GM12878 (cell line): ENCODE measurements at regions of chr4 and their contacts with region 1.

Region 1: DNA sequence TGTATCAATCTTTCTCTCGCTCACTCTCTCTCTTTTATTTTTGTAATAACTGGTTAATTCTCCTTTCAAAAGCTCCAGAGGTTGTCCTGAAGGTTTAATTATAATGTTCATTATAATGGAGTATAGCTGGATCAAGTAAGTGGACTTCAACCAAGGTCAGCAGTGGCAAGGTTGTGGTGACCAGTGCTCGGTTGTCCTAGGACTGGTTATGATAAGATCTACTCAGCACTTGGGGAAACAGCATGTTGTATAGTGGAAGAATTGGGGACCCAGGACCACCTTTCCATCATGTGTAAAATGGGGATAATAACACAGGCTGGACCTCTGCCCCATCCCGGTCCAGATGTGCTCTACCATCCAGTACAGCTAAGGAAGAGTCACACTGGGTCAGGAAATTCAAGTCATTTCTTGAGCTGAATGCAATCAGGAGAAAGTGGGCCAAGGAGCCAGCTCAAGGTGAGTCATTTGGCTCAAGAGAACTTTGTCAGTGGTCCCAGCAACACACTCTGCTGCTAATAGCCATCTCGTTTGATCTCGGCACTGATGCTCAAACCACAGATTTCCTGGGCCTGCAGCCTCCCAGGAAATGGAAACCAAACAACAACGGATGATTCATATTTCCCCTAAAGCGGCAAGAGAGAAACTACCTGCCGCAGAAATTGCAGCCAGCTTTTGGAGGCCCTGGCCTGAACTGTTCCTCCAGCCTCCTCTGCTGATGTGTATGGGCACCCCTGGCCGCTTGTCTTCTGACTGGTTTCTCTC is 123.6 kb upstream of the RBPJ start:
- DNase-seq: peak; percentile 89
- ATAC-seq: peak; percentile 84
- H3K4me3 ChIP-seq: no peak overlapping the region
- H3K27ac ChIP-seq: peak overlapping the region; percentile 14; the same call in 1 of the 2 replicates
- H3K4me1 ChIP-seq: peaks cover 35% of the 10 kb centered on the region
- H3K27me3 ChIP-seq: no peaks in the 10 kb centered on the region
- CTCF ChIP-seq: no peak
- EP300 ChIP-seq: peak; percentile 49 to 50; a peak in 2 of 4 replicates
- POLR2A ChIP-seq: no peak
- RAD21 ChIP-seq: peak; percentile 37

Region 2: GRCh38 chr4:26299254-26299882 is 102.2 kb after region 1 on chr4:
- CTCF ChIA-PET with region 1: no interaction called
- POLR2A ChIA-PET with region 1: interaction called, 10 read pairs
- RAD21 ChIA-PET with region 1: no interaction called
- SMC1A ChIA-PET with region 1: no interaction called
- in situ Hi-C with region 1: no loop called
- intact Hi-C with region 1: no loop called
- DNase-seq: no peak
- ATAC-seq: peak; percentile 92
- H3K4me3 ChIP-seq: no peak overlapping the region
- H3K27ac ChIP-seq: no peak overlapping the region; the same call in 1 of the 2 replicates
- H3K4me1 ChIP-seq: peaks cover 7% of the 10 kb centered on the region; the same call in 1 of the 2 replicates
- H3K27me3 ChIP-seq: no peaks in the 10 kb centered on the region
- CTCF ChIP-seq: no peak
- EP300 ChIP-seq: no peak
- POLR2A ChIP-seq: no peak
- RAD21 ChIP-seq: no peak

Region 3: DNA sequence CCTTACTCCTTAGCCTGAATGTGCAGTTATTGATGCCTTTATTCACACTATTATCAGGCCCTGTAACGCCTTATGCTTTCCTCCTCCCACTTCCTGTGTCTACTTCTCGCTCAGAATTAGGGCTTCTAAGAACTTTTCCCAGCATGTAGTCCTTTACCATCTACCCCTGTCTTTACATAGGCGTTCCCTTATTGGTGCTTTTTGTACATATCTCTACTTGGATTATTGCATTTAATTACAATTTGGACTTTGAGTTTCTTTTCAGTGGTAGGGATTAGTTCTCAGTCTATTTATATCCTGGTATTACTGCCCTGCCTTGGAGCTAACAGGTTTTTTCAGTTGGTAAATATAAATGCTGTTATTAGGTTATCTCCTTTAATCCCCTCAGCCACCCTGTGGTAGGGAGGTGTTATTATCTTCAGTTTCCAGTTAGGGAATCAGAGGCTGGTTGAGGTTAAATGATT is 207.6 kb after region 1 on chr4:
- CTCF ChIA-PET with region 1: interaction called, 3 read pairs
- POLR2A ChIA-PET with region 1: no interaction called
- RAD21 ChIA-PET with region 1: no interaction called
- SMC1A ChIA-PET with region 1: no interaction called
- in situ Hi-C with region 1: no loop called
- intact Hi-C with region 1: loop called (anchors 5 kb)
- DNase-seq: no peak
- ATAC-seq: no peak
- H3K4me3 ChIP-seq: no peak overlapping the region
- H3K27ac ChIP-seq: no peak overlapping the region
- H3K4me1 ChIP-seq: peaks cover 10% of the 10 kb centered on the region
- H3K27me3 ChIP-seq: no peaks in the 10 kb centered on the region
- CTCF ChIP-seq: no peak
- EP300 ChIP-seq: no peak
- POLR2A ChIP-seq: no peak
- RAD21 ChIP-seq: no peak

Region 4: DNA sequence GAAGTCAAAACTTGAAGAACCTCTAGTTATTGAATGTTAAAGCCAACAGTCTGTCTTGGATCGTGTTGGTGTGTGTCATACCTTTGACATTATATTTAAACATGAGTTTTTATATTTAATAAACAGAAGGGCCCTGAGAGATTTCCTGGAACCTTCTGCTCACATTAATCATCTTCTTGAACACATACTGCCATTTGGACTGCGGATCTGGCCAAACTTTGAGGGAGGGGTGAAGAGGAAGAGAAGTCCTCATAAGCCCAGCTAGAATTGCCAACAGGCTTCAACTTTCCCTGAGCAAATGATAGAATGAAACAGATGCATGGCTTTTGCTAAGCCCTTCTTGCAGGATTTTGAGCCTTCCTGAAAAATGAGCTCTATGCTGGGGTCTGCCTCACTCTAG is 265.7 kb after region 1 on chr4:
- CTCF ChIA-PET with region 1: no interaction called
- POLR2A ChIA-PET with region 1: no interaction called
- RAD21 ChIA-PET with region 1: no interaction called
- SMC1A ChIA-PET with region 1: no interaction called
- in situ Hi-C with region 1: no loop called
- intact Hi-C with region 1: no loop called
- DNase-seq: no peak
- ATAC-seq: no peak
- H3K4me3 ChIP-seq: no peak overlapping the region
- H3K27ac ChIP-seq: no peak overlapping the region
- H3K4me1 ChIP-seq: no peaks in the 10 kb centered on the region; the same call in 1 of the 2 replicates
- H3K27me3 ChIP-seq: peaks cover 0 to 2% of the 10 kb centered on the region in 2 experiments; a peak in 2 of 4 replicates
- CTCF ChIP-seq: no peak
- EP300 ChIP-seq: no peak
- POLR2A ChIP-seq: no peak
- RAD21 ChIP-seq: no peak